Activated T-helper 2 cell treated with anti-CD3 and anti-CD28 coated beads, Interferon-gamma antibody, Interleukin-2, Interleukin-4, amounts not matched to agents 10 μg/mL and 5 μg/mL and 100 μg/mL, durations not matched to agents 14 hours and 24 hours and 36 hours (primary cell): ENCODE measurements at regions of chr17 and their contacts with region 1.

Region 1: GRCh38 chr17:42019509-42020404 is at the start of gene NKIRAS2:
- DNase-seq: peak; percentile 93
- H3K4me3 Mint-ChIP-seq: peak within 1 kb of the TSS; percentile 99
- H3K27ac Mint-ChIP-seq: peak within 1 kb of the TSS; percentile 79
- H3K4me1 Mint-ChIP-seq: peaks cover 42% of the 10 kb centered on the region
- H3K27me3 Mint-ChIP-seq: no peaks in the 10 kb centered on the region
- total RNA-seq, gene NKIRAS2: 25.8 and 28.2 TPM in 2 replicates

Region 2: DNA sequence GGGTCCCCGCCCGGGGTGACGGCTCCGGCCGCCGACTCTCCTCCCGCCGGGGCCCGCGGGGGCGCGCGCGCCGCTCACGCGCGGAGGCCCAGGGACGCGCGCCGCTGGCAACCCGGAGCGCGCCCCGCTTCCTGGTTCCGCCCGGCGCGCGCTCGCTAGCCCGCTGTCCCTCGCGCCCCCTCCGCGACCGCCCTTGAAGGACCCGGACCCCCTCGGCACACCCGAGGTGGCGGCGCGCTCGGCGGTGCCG is 256.5 kb after region 1 on chr17 and contains the start of gene STAT5B:
- intact Hi-C with region 1: loop called (anchors 2 kb)
- DNase-seq: peak; percentile 71
- H3K4me3 Mint-ChIP-seq: peak within 1 kb of the TSS; percentile 94
- H3K27ac Mint-ChIP-seq: peak within 1 kb of the TSS; percentile 93
- H3K4me1 Mint-ChIP-seq: peaks cover 39% of the 10 kb centered on the region
- H3K27me3 Mint-ChIP-seq: no peaks in the 10 kb centered on the region
- total RNA-seq, gene STAT5B: 162 and 164 TPM in 2 replicates